Astrocyte of the cerebellum (primary cell): ENCODE measurements at regions of chr17 and their contacts with region 1.

Region 1: GRCh38 chr17:67004181-67004580 is 39.7 kb downstream of the CACNG4 start:
- DNase-seq: no peak
- H3K4me3 ChIP-seq: no peak overlapping the region
- CTCF ChIP-seq: no peak

Region 2: DNA sequence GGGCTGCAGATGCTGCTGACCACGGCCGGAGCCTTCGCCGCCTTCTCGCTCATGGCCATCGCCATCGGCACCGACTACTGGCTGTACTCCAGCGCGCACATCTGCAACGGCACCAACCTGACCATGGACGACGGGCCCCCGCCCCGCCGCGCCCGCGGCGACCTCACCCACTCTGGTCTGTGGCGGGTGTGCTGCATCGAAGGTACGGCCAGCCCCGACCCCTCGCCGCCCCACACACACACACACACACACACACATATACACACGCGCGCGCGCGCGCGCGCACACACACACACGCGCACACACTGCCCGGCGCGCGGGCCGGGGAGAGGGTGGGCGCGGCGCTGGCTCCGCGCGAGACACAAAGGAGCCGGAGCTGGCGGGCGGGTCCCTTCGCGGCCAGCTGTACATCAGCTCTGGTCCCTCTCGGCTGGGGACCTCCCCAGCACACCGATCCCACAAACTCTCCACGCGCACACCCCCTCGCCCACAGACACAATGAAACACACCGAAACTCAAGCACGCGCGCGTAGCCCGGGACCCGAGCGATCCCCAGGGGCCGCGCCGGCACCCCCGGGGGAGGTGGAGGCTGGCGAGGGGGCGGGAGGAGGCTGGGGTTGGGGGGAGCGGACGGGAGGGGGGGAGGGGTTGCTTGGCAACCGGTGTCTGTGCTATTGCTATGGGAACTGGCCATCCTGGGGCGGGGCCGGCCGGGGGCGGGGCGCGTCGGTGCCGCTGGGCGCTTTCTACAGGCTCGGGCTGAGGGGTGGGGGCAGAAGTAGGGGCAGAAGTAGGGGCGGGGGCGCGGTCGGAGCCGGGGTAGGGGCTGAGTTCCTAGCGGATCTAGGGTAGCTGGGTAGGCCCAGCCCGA is 39.0 kb before region 1 on chr17:
- in situ Hi-C with region 1: loop called (anchors 5 kb)
- DNase-seq: no peak
- H3K4me3 ChIP-seq: peak overlapping the region; percentile 38
- CTCF ChIP-seq: no peak